Activated CD8-positive, alpha-beta T cell treated with anti-CD3 and anti-CD28 coated beads for 36 hours (primary cell): ENCODE measurements at regions of chr3 and their contacts with region 1.

Region 1: DNA sequence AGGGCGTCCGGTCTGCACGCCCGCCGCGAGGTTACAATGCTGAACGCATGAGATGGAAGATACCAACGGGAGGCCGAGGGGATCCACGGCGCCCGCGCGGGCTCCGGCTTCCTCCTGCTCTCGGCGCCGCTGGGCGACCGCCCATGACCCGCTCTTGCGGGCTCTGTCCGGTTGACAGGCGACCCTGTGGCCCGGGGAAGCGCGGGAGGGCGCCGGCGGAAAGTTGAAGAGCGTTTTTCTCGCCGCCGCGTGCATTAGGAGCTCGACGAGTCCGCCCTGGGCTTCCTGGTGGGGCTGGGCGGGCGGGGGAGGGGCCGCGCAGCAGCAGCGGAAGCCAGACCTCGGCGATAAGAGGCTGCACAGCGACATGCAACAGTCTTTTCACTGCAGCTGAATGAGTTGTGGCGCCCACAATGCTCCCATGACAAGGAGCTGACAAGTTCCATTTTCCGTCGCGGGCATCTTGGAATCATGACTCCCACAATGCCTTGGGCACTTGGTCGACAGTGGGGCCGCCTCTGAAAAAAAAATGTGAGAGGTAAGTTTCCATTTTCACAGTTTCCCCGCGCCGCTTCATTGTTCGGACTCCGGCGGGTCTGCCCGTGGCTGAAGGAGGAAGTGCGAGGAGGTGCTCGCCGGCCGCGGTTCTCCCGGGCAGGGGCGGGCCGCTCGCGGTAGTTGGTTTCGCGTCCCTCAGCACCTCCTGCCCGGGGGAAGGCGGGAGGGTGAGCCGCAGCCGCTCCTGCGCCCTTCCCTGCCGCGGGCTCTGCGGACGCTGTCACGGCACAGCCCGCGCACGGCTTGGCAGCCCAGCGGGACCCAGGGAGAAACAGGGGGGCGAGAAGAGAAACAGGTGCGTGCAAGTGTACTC is at the start of gene MBNL1:
- DNase-seq: peak; percentile 94
- ATAC-seq: peak; percentile 71
- H3K4me3 Mint-ChIP-seq: peak within 1 kb of the TSS; percentile 82
- H3K27ac Mint-ChIP-seq: peak within 1 kb of the TSS; percentile 97
- H3K4me1 Mint-ChIP-seq: peaks cover 48% of the 10 kb centered on the region
- H3K27me3 Mint-ChIP-seq: no peaks in the 10 kb centered on the region
- CTCF ChIP-seq: no peak
- total RNA-seq, gene MBNL1: 341 to 360 TPM

Region 2: DNA sequence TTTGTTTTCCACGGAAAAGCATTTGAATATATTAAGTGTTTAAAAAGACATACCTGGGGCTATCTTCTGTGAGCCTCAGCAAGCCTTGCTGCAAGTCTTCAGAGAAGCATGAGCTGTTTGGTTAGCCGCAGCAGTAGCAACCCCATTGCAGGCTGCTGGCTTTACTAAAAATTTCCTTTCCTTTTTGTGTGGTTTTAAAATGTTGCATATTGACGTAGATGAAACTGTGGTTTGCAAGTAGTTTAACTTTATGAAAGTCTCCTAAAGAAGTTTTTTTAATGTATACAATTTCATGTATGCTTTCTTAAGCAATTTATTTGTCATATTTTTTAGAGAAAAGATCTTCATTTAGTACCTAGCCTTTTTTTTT is 1065.8 kb before region 1 on chr3 and contains the start of gene GPR171:
- CTCF ChIA-PET with region 1: no interaction called
- POLR2A ChIA-PET with region 1: interaction called, 33 read pairs
- intact Hi-C with region 1: no loop called
- DNase-seq: peak; percentile 82
- ATAC-seq: peak; percentile 64
- H3K4me3 Mint-ChIP-seq: peak within 1 kb of the TSS; percentile 87
- H3K27ac Mint-ChIP-seq: peak within 1 kb of the TSS; percentile 96
- H3K4me1 Mint-ChIP-seq: peaks cover 54% of the 10 kb centered on the region
- H3K27me3 Mint-ChIP-seq: no peaks in the 10 kb centered on the region
- CTCF ChIP-seq: no peak
- total RNA-seq, gene GPR171: 91.8 to 101 TPM

Region 3: DNA sequence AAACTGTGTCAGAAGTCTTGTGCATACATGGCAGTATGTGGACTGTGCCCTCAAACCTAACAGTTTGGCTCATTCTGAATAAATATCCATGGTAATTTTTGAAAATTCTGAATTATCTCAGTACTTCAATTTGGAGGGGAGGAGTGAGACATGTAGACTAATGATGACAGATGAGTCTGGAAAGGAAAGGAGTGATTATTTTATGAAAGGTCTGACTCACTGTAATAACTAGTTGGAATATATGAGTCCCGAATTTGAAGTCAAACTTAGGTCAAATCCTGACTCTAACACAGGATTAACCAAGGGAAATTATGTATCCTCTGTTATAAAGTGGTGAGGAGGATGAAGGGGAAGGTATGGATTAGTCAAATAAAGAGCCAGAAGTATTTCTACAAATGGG is 356.8 kb before region 1 on chr3:
- CTCF ChIA-PET with region 1: no interaction called
- POLR2A ChIA-PET with region 1: no interaction called
- intact Hi-C with region 1: no loop called
- DNase-seq: no peak
- ATAC-seq: no peak
- H3K4me3 Mint-ChIP-seq: no peak overlapping the region
- H3K27ac Mint-ChIP-seq: no peak overlapping the region
- H3K4me1 Mint-ChIP-seq: no peaks in the 10 kb centered on the region
- H3K27me3 Mint-ChIP-seq: peaks cover 2% of the 10 kb centered on the region
- CTCF ChIP-seq: no peak

Region 4: GRCh38 chr3:152193673-152194267 is 75.0 kb before region 1 on chr3:
- CTCF ChIA-PET with region 1: interaction called, 3 read pairs
- POLR2A ChIA-PET with region 1: interaction called, 39 read pairs
- intact Hi-C with region 1: loop called (anchors 2 kb)
- DNase-seq: peak; percentile 60
- ATAC-seq: peak; percentile 60
- H3K4me3 Mint-ChIP-seq: peak overlapping the region; percentile 76
- H3K27ac Mint-ChIP-seq: peak overlapping the region; percentile 94
- H3K4me1 Mint-ChIP-seq: peaks cover 74% of the 10 kb centered on the region
- H3K27me3 Mint-ChIP-seq: no peaks in the 10 kb centered on the region
- CTCF ChIP-seq: no peak

Region 5: GRCh38 chr3:152241142-152242017 is 27.4 kb before region 1 on chr3:
- CTCF ChIA-PET with region 1: interaction called, 21 read pairs
- POLR2A ChIA-PET with region 1: interaction called, 159 read pairs
- intact Hi-C with region 1: loop called (anchors 2 kb)
- DNase-seq: peak; percentile 54
- ATAC-seq: peak; percentile 62
- H3K4me3 Mint-ChIP-seq: peak overlapping the region; percentile 47
- H3K27ac Mint-ChIP-seq: peak overlapping the region; percentile 93
- H3K4me1 Mint-ChIP-seq: peaks cover 58% of the 10 kb centered on the region
- H3K27me3 Mint-ChIP-seq: no peaks in the 10 kb centered on the region
- CTCF ChIP-seq: no peak

Region 6: GRCh38 chr3:152281133-152281713 is 12.4 kb after region 1 on chr3:
- CTCF ChIA-PET with region 1: interaction called, 6 read pairs
- POLR2A ChIA-PET with region 1: interaction called, 35 read pairs
- intact Hi-C with region 1: loop called (anchors 2 kb)
- DNase-seq: peak; percentile 36
- ATAC-seq: peak; percentile 43
- H3K4me3 Mint-ChIP-seq: peak overlapping the region; percentile 48
- H3K27ac Mint-ChIP-seq: peak overlapping the region; percentile 89
- H3K4me1 Mint-ChIP-seq: peaks cover 73% of the 10 kb centered on the region
- H3K27me3 Mint-ChIP-seq: no peaks in the 10 kb centered on the region
- CTCF ChIP-seq: no peak

Region 7: GRCh38 chr3:152298393-152299242 is 29.8 kb after region 1 on chr3:
- CTCF ChIA-PET with region 1: no interaction called
- POLR2A ChIA-PET with region 1: interaction called, 26 read pairs
- intact Hi-C with region 1: no loop called
- DNase-seq: peak; percentile 80
- ATAC-seq: peak; percentile 87
- H3K4me3 Mint-ChIP-seq: peak overlapping the region; percentile 73
- H3K27ac Mint-ChIP-seq: peak overlapping the region; percentile 96
- H3K4me1 Mint-ChIP-seq: peaks cover 74% of the 10 kb centered on the region
- H3K27me3 Mint-ChIP-seq: no peaks in the 10 kb centered on the region
- CTCF ChIP-seq: no peak

Region 8: GRCh38 chr3:152460936-152461335 is 192.1 kb after region 1 on chr3:
- CTCF ChIA-PET with region 1: no interaction called
- POLR2A ChIA-PET with region 1: no interaction called
- intact Hi-C with region 1: no loop called
- DNase-seq: no peak
- ATAC-seq: no peak
- H3K4me3 Mint-ChIP-seq: no peak overlapping the region
- H3K27ac Mint-ChIP-seq: peak overlapping the region; percentile 10
- H3K4me1 Mint-ChIP-seq: peaks cover 34% of the 10 kb centered on the region
- H3K27me3 Mint-ChIP-seq: no peaks in the 10 kb centered on the region
- CTCF ChIP-seq: no peak